ENCODE measurements at regions of chr10 and their contacts with region 1.

Region 1: GRCh38 chr10:30413996-30414576 is 19.9 kb upstream of the MAP3K8 start:
- DNase-seq: no peak

Region 2: GRCh38 chr10:30456266-30456665 is 42.2 kb after region 1 on chr10:
- intact Hi-C with region 1: loop called in 1 of 2 experiments (anchors 5 kb)
- DNase-seq: no peak

Region 3: GRCh38 chr10:30940256-30940655 is 526.2 kb after region 1 on chr10:
- intact Hi-C with region 1: no loop called
- DNase-seq: no peak

Measured in posterior vena cava (tissue), 2 donors.